ENCODE measurements at regions of chr12 and their contacts with region 1.

Region 1: GRCh38 chr12:8890313-8891085 is 23.8 kb upstream of the PHC1 start:
- DNase-seq: peak; percentile 61
- H3K27ac ChIP-seq: no peak overlapping the region
- CTCF ChIP-seq: peak; percentile 66

Region 2: DNA sequence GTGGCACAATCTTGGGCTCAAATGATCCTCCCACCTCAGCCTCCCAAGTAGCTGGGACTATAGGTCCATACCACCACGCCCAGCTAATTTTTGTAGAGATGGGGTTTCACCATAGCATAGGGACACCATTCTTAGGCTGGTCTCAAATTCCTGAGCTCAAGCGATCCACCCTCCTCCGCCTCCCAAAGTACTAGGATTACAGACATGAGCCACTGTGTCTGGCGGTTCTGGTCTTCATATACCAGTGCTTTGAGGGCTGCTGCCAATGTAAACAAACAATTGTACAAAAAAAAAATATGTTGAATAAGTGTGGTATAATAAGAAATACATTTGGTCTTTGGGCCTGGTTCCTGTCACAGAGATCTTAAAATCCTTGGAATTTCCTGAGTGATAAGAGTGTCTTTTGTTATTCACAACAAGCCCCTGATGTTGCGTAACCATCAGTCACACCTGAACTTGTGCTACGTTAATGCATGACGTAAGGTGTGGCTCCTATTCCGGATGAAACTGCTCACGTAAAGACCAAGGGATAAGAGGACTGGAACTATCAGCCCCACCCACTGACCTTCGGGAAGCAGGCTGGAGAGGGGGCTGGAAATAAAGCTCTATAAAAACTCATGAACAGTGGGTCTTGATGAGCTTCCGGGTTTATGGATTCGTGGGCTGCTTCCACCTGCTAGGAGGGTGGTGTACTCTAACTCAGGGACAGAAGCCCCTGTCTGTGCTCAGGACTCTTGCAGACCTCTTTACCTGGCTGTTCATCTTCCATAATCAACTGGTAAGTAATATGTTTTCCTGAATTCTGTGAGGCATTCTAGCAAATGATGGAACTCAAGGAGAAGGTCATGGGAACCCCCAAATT is 209.2 kb before region 1 on chr12:
- CTCF ChIA-PET with region 1: interaction called, 13 read pairs
- POLR2A ChIA-PET with region 1: no interaction called
- DNase-seq: peak; percentile 69
- H3K27ac ChIP-seq: peak overlapping the region; percentile 60
- CTCF ChIP-seq: no peak

Region 3: DNA sequence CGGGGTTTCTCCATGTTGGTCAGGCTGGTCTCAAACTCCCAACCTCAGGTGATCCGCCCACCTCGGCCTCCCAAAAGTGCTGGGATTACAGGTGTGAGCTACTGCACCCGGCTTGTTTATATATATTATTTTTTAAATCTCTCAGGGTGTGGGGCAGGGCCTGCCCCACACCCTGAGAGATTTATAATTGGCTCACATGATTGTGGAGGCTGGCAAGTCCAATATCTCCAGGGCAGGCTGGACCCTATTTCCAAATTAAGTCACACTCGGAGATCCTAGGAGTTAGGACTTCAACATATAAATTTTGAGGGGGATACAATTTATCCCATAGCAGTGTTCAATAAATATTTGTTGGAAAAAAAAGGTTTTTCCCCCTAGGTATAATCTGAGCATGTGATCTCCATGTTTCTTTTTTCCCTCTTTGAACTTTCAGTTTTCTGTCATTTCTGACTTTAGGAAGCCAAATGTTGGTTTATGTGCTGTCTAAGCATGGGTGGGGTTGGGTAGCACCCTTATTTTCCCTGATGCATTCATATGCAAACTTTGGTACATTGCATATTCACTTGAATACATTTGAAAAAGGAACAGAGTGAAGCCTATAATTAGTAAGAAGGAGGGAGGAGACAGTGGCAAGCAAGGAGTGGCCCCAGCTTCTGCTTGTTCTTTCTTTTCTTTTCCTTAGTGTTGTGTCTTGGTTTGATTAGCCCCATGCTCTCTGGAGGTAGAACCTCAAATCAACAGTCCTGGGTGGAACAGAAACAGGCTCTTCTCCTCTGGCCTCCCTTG is 76.7 kb before region 1 on chr12:
- CTCF ChIA-PET with region 1: no interaction called
- POLR2A ChIA-PET with region 1: no interaction called
- DNase-seq: no peak
- H3K27ac ChIP-seq: no peak overlapping the region
- CTCF ChIP-seq: no peak

Region 4: GRCh38 chr12:8860165-8860961 is 30.1 kb before region 1 on chr12:
- CTCF ChIA-PET with region 1: interaction called, 11 read pairs
- POLR2A ChIA-PET with region 1: interaction called, 5 read pairs
- DNase-seq: no peak
- H3K27ac ChIP-seq: no peak overlapping the region
- CTCF ChIP-seq: no peak